ENCODE measurements at regions of chr1 and their contacts with region 1.

Region 1: DNA sequence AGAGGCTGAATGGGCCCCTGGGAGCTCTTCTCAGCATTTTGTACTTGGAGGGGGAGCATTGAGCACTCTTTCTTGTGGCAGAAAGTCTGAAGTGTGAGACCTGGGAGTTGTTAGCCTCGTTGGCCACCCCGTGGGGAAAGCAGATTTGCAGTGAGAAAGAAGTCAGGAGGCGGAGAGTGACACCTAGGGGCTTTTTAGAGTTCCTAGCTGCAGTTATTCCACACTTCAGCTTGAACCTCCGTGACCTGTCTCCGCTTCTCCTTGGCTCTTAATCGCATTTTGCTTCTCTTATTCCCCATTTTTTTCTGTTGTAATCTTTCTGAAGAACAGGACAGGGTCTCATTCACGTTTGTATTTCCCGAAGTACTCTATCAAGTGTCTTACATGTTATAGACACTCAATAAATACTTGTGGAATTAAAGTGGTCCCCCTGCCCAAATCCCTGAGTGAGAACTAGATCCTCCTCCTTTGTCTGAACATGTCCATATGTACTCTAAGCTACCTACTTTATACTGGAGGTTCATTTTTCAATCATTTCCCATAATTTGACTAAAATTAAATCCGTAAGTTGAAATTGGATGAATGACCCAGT is 14.5 kb upstream of the C1orf141 start:
- DNase-seq: peak; percentile 78
- ATAC-seq: peak; percentile 90
- H3K4me3 Mint-ChIP-seq: no peak overlapping the region
- H3K27ac Mint-ChIP-seq: peak overlapping the region; percentile 64
- H3K4me1 Mint-ChIP-seq: peaks cover 34% of the 10 kb centered on the region
- H3K27me3 Mint-ChIP-seq: peaks cover 16% of the 10 kb centered on the region

Region 2: DNA sequence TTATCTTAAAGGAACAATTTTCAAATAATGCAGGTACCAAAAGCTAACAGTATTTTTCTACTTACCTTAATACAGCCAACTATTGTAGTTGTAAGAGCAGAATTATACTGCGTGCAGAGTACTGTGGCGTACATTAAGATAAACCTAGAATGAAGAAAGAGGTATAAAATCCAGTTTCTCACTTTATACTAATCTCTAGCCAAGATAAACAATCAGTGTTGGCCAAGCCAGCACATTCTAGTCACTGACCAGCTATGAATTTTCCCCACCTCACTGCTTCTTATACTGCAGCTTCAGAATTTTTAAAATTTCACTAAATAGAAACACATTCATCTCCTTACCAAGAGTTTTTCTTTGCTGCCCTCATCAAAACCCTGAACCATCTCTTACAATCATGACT is 129.0 kb before region 1 on chr1:
- CTCF ChIA-PET with region 1: no interaction called
- POLR2A ChIA-PET with region 1: no interaction called
- intact Hi-C with region 1: no loop called
- DNase-seq: no peak
- ATAC-seq: no peak
- H3K4me3 Mint-ChIP-seq: no peak overlapping the region
- H3K27ac Mint-ChIP-seq: no peak overlapping the region
- H3K4me1 Mint-ChIP-seq: no peaks in the 10 kb centered on the region
- H3K27me3 Mint-ChIP-seq: no peaks in the 10 kb centered on the region

Region 3: DNA sequence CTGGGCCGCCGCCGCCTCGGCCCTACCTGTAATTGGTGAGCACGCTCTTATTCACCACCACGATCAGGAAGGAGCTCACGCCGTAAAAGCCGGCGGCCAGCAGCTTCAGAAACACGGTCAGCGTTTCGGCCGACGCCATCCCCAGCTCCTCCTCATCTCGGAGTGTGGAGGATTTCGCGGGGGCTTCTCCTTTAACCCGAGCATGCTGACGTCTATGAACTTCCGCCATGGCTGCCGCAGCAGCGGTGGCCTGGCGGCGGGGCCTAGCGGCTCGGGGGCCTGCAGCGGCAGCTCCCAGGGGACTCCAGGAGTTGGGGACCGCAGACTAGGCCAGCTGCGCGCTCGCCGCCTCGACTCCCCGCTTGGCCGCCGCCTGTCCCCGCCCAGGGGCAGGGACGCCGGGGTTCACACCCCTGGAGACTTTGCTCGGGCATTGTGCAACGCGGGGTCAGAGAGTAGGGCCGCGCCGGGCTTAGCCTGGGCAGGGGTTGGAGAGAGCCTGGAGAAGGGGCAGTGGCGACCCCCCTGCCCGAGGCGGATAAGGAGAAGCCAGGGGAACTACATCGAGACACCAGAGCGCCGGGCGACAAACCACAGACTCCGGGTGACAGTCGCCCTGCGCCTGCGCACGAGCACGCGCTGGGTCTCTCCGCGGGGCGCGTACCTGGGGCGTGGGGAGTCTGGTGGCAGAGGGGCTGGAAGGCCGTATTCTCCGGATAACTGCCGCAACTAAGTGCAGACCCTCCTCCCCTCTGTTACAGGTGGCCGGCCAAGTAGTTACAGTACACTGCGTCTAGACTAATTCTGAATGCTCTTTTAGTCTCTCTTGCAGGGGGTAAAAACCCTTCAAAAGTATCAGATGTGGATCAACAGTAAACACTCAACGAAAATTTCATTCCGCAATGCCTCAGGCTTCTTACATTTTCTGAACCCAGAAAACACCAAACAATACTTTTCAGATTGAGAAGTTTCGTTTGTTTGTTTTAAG is 95.2 kb before region 1 on chr1 and contains the start of gene SLC35D1:
- CTCF ChIA-PET with region 1: interaction called, 22 read pairs
- POLR2A ChIA-PET with region 1: interaction called, 6 read pairs
- intact Hi-C with region 1: loop called (anchors 5 kb)
- DNase-seq: peak; percentile 77
- ATAC-seq: peak; percentile 79
- H3K4me3 Mint-ChIP-seq: peak within 1 kb of the TSS; percentile 79
- H3K27ac Mint-ChIP-seq: peak within 1 kb of the TSS; percentile 91
- H3K4me1 Mint-ChIP-seq: peaks cover 26% of the 10 kb centered on the region
- H3K27me3 Mint-ChIP-seq: peaks cover 5% of the 10 kb centered on the region
- total RNA-seq, gene SLC35D1: 8.7 to 10.3 TPM

Region 4: GRCh38 chr1:67134695-67135094 is 14.6 kb before region 1 on chr1 and contains the start of gene C1orf141:
- CTCF ChIA-PET with region 1: interaction called, 33 read pairs
- POLR2A ChIA-PET with region 1: interaction called, 3 read pairs
- intact Hi-C with region 1: no loop called
- DNase-seq: peak; percentile 52
- ATAC-seq: peak; percentile 49
- H3K4me3 Mint-ChIP-seq: peak within 1 kb of the TSS; percentile 48
- H3K27ac Mint-ChIP-seq: no peak within 1 kb of the TSS
- H3K4me1 Mint-ChIP-seq: peaks cover 11% of the 10 kb centered on the region
- H3K27me3 Mint-ChIP-seq: no peaks in the 10 kb centered on the region
- total RNA-seq, gene C1orf141: 0.11 TPM in 1 of 2 experiments, not detected in the other

Region 5: DNA sequence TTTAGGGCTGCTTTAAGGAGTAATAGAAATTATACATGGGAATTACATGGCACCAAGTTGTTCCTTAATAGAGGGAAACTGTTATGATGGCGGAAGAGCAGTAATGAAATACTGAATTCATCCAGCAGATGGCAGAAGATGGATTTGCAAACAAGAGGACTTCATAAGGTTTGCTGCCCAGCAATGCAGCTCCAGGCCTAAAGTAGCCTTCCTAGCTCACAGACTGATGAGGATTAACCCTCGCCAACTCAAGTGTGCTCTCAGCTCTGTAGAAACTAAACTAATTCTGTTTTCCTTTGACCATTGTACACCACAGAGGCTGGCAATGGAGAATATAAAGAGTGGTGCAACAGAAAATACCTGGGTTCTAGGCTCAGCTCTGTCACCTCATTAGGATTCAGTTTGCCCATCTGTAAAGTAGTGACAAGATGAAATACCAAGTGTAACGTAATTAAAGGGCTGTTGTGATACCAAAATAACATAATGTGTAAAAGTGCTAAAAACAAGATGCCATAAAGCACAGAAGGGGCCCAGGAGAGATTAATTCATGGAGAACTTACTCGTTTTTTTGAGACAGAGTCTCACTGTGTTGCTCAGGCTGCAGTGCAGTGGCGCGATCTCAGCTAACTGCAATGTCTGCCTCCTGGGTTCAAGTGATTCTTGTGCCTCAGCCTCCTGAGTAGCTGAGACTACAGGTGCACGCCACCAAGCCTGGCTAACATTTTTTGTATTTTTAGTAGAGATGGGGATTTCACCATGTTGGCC is 383.4 kb after region 1 on chr1:
- CTCF ChIA-PET with region 1: no interaction called
- POLR2A ChIA-PET with region 1: no interaction called
- intact Hi-C with region 1: no loop called
- DNase-seq: peak; percentile 22
- ATAC-seq: no peak
- H3K4me3 Mint-ChIP-seq: no peak overlapping the region
- H3K27ac Mint-ChIP-seq: no peak overlapping the region
- H3K4me1 Mint-ChIP-seq: no peaks in the 10 kb centered on the region
- H3K27me3 Mint-ChIP-seq: peaks cover 8% of the 10 kb centered on the region

Measured in activated CD4-positive, alpha-beta T cell treated with anti-CD3 and anti-CD28 coated beads for 36 hours (primary cell).